ENCODE measurements at regions of chr14 and their contacts with region 1.

Region 1: GRCh38 chr14:61456720-61457119 is 135.3 kb downstream of the PRKCH start:
- DNase-seq: peak; percentile 74

Region 2: DNA sequence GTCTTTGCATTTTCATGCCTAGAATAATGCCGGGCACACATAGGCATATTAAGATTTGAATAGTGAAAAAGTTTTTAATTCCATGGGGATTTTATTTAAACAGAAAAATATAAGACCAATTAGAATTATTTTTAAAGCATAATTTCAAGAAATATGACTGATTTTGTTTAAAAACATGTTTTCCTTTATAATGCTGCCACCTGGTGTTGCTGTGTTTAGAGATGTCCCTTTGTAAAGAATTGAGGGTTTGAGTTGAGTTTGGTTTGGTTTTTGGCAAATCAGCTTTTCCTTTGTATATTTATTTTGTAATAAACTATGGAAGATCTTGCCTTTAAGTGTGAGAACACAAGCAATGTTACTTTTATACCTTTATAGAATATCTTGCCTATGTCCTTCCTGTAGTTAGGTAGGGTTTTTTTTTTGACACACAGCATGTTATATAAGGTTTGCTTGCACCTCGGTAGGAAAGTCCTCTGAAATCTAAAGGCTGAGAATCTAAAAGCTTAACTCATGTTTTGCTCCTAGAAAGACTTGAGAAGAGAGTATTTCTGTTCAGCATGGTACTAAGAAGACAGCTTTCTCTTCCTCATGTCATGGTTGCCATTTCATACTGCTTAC is 274.1 kb after region 1 on chr14:
- in situ Hi-C with region 1: loop called (anchors 25 kb)
- DNase-seq: peak; percentile 27

Measured in ACHN (cell line).